ENCODE measurements at regions of chr11 and their contacts with region 1.

Region 1: GRCh38 chr11:17354601-17354991 is 3.0 kb downstream of the NCR3LG1 start:
- DNase-seq: peak; percentile 82
- H3K4me3 Mint-ChIP-seq: peak overlapping the region; percentile 81
- H3K27ac Mint-ChIP-seq: no peak overlapping the region
- H3K4me1 Mint-ChIP-seq: peaks cover 25% of the 10 kb centered on the region
- H3K27me3 Mint-ChIP-seq: peaks cover 7% of the 10 kb centered on the region

Region 2: DNA sequence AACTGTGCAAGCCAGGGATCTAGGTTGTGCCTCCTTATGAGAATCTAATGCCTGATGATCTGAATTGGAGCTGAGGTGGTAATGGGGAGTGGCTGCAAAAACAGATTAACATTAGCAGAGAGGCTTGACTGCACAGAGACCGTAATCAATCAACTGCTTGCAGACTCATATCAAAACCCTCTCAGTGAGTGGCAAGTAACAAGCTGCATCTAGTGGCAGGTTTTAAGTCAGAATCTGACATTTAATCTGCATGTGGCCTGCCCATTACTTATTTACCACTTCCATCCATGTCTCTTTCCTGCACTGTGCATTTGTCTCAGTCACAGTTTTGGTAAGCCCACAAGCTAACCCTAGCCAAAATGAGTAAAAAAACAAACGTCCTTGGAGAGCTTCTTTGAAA is 604.9 kb before region 1 on chr11:
- CTCF ChIA-PET with region 1: no interaction called
- intact Hi-C with region 1: loop called (anchors 5 kb)
- DNase-seq: peak; percentile 27
- H3K4me3 Mint-ChIP-seq: no peak overlapping the region
- H3K27ac Mint-ChIP-seq: peak overlapping the region; percentile 72
- H3K4me1 Mint-ChIP-seq: peaks cover 38% of the 10 kb centered on the region
- H3K27me3 Mint-ChIP-seq: no peaks in the 10 kb centered on the region

Region 3: DNA sequence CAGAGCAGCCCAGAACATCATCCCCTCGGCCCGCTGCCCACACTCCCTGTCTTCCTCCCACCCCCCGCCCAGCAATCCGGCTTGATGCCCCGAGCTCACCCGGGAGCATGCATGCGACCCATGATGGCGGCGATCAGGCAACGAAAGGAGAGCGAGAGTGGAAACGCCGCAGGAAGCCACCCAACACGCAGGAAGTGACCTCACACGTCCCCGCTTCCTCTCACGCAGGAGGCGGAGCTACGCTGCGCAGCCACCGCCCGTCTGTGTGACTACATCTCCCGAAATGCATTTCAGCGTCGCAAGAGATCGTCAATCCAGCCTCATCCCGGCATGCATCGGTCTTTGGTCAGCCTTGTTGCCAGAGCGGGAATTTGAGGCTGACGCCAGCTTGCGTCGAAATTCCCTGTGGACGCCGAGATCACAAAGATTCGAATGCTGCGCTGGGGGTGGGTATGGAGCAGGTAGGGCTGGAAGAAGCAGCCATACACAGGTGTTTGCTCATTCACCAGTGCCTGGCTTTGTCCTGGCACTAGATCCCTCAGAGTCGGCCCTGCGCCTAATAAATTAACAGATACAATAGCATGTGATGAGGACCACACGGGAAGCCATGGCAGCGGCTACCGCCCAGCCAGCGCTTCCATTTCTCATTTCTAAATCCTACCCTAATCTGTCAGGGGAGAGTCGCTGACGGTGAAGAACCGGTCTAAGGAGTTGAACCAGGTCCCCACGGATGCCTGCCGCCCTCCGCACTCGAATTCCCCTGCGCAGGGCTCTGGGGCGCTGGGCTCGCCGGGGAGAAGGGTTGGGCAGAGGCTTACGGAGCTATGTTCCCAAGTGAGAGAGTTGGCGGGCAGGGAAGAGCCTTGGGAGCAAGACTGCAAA is 276.8 kb before region 1 on chr11 and contains the start of gene RPS13:
- CTCF ChIA-PET with region 1: interaction called, 3 read pairs
- intact Hi-C with region 1: loop called (anchors 5 kb)
- DNase-seq: peak; percentile 97
- H3K4me3 Mint-ChIP-seq: peak within 1 kb of the TSS; percentile 93
- H3K27ac Mint-ChIP-seq: peak within 1 kb of the TSS; percentile 97
- H3K4me1 Mint-ChIP-seq: peaks cover 27% of the 10 kb centered on the region
- H3K27me3 Mint-ChIP-seq: no peaks in the 10 kb centered on the region
- total RNA-seq, gene RPS13: 2,045 to 2,099 TPM

Region 4: DNA sequence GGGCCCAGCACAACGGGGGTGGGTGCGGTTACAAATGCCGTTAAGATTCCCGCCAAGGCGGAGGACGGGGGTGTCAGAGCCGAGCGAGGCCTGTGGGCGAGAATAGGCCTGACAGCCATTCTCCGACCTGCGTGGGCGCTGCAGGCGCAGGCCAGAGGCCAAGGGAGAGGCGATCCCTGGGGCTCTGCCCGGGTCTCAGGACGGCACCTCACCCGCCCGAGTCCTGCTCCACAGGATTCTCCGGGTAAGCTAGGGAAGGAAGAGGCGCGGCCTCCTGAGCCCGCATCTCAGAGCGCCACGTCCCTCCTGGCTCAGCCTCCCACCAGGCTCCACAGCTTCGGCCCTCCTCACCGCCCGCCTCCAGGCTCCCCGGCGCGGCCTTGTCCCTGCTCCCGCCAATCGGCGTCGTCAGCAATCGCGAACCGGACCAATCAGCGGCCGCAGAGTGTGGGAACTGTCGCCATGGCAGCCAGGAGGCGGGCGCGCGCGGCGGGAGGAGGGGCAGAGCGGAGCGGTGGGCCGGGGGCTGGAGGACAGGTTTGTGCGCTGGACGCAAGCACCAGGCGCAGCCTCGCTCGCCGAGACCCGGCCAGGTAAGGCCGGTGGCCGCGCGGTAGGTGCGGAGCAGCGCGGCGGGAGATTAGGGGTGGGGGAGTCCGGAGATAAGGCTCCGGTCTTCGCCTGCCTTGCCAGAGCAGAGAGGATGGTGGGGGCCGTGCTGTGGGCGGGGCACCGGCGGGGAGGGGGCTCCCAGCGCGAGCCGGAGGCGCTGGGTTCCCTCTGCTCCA is 78.2 kb before region 1 on chr11 and contains the start of gene NUCB2:
- CTCF ChIA-PET with region 1: interaction called, 4 read pairs
- intact Hi-C with region 1: loop called (anchors 1 kb)
- DNase-seq: peak; percentile 98
- H3K4me3 Mint-ChIP-seq: peak within 1 kb of the TSS; percentile 75
- H3K27ac Mint-ChIP-seq: peak within 1 kb of the TSS; percentile 83
- H3K4me1 Mint-ChIP-seq: peaks cover 33% of the 10 kb centered on the region
- H3K27me3 Mint-ChIP-seq: no peaks in the 10 kb centered on the region
- total RNA-seq, gene NUCB2: 67.7 to 74.0 TPM

Region 5: DNA sequence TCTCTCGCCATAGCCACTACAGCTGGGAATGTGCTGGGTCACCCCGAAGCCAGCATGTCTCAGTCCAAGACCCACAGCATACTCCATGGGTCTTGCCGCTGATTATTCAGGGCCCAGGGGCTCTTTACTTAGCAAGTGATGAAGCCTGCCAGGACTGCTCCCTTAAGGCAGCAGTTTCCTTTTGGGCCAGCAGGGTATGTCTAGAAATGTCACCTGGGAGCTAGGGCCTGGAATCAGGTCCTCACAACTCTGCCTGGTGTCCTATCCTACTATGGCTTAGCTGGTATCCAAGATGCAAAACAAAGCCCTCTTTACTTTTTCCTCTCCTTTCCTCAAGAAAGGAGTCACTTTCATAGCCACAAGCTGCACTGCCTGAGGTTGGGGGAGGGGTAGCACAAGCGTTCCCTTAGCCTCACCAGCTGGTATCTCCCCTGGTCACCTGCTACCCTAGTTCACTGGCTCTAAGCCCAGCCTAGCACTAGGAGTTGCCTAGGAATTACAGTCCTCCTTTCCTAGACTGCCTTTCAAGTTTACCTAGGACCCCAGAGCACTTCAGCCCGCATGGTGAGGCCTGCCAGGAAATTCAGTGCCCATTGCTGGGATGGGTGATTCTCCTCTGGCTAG is 25.6 kb before region 1 on chr11:
- CTCF ChIA-PET with region 1: no interaction called
- intact Hi-C with region 1: no loop called
- DNase-seq: no peak
- H3K4me3 Mint-ChIP-seq: no peak overlapping the region
- H3K27ac Mint-ChIP-seq: no peak overlapping the region
- H3K4me1 Mint-ChIP-seq: peaks cover 8% of the 10 kb centered on the region
- H3K27me3 Mint-ChIP-seq: no peaks in the 10 kb centered on the region

Region 6: DNA sequence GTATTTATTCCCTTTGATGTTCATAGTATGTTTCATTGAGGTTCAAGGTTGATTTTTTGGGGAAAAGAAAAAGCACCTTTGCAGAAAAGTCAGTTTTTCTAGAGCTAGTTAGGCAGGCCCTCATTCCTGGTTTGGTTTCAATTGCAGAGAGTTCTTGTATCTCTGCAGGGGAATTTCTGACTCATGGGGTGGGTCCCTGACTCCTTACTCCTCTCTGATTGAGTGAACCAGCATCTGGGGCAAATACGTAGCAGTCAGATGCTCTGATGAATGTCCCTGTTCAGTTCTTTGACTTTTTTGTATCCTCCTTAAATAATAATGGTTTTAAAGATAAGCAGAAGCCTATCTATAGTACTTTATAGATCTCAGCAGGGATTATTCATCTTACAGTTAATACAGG is 10.7 kb before region 1 on chr11:
- CTCF ChIA-PET with region 1: interaction called, 7 read pairs
- intact Hi-C with region 1: loop called (anchors 1 kb)
- DNase-seq: peak; percentile 90
- H3K4me3 Mint-ChIP-seq: no peak overlapping the region
- H3K27ac Mint-ChIP-seq: peak overlapping the region; percentile 51
- H3K4me1 Mint-ChIP-seq: peaks cover 19% of the 10 kb centered on the region
- H3K27me3 Mint-ChIP-seq: no peaks in the 10 kb centered on the region

Region 7: GRCh38 chr11:17384002-17384511 is 29.5 kb after region 1 on chr11:
- CTCF ChIA-PET with region 1: interaction called, 15 read pairs
- intact Hi-C with region 1: loop called (anchors 1 kb)
- DNase-seq: peak; percentile 88
- H3K4me3 Mint-ChIP-seq: no peak overlapping the region
- H3K27ac Mint-ChIP-seq: no peak overlapping the region
- H3K4me1 Mint-ChIP-seq: peaks cover 2% of the 10 kb centered on the region
- H3K27me3 Mint-ChIP-seq: no peaks in the 10 kb centered on the region

Measured in activated naive CD4-positive, alpha-beta T cell treated with anti-CD3 and anti-CD28 coated beads for 36 hours (primary cell).